ENCODE measurements at regions of chr15 and their contacts with region 1.

Region 1: GRCh38 chr15:101156509-101157159 is 95.2 kb downstream of the CHSY1 start:
- DNase-seq: no peak
- H3K4me3 ChIP-seq: no peak overlapping the region
- H3K27ac ChIP-seq: no peak overlapping the region
- H3K4me1 ChIP-seq: peaks cover 0 to 6% (median 0%) of the 10 kb centered on the region in 4 experiments; a peak in 3 of 7 replicates
- H3K27me3 ChIP-seq: peaks cover 0 to 2% (median 0%) of the 10 kb centered on the region in 4 experiments; a peak in 1 of 7 replicates
- CTCF ChIP-seq: no peak
- EP300 ChIP-seq: no peak
- POLR2A ChIP-seq: no peak
- RAD21 ChIP-seq: no peak

Region 2: DNA sequence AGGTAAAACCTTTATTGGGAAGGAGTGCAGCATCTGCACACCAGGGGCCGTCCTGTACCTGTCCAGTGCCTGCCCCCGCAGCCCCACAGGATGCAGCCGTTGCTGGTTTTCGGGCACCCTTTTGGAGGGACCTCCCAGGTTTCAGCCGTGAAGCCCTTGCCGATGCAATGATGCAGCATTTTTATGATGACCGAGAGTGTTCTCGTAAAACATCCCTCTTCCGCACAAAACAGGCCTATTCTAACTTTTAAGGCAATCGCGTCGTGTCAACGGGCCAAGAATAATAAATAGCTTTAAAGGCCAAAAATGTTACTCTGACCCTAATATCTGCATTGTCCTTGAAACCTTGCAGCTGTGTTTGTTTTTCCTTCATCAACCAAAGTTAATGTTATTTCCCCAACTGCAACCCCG is 111.4 kb before region 1 on chr15:
- CTCF ChIA-PET with region 1: no interaction called
- POLR2A ChIA-PET with region 1: no interaction called
- DNase-seq: no peak
- H3K4me3 ChIP-seq: no peak overlapping the region
- H3K27ac ChIP-seq: no peak overlapping the region
- H3K4me1 ChIP-seq: peaks cover 0 to 9% (median 5%) of the 10 kb centered on the region in 4 experiments; a peak in 6 of 7 replicates
- H3K27me3 ChIP-seq: 0 out of 7 replicates have a peak, but pooled peaks cover 0 to 2% (median 0%) of the 10 kb centered on the region in 4 experiments
- CTCF ChIP-seq: no peak
- EP300 ChIP-seq: no peak
- POLR2A ChIP-seq: no peak
- RAD21 ChIP-seq: no peak

Region 3: DNA sequence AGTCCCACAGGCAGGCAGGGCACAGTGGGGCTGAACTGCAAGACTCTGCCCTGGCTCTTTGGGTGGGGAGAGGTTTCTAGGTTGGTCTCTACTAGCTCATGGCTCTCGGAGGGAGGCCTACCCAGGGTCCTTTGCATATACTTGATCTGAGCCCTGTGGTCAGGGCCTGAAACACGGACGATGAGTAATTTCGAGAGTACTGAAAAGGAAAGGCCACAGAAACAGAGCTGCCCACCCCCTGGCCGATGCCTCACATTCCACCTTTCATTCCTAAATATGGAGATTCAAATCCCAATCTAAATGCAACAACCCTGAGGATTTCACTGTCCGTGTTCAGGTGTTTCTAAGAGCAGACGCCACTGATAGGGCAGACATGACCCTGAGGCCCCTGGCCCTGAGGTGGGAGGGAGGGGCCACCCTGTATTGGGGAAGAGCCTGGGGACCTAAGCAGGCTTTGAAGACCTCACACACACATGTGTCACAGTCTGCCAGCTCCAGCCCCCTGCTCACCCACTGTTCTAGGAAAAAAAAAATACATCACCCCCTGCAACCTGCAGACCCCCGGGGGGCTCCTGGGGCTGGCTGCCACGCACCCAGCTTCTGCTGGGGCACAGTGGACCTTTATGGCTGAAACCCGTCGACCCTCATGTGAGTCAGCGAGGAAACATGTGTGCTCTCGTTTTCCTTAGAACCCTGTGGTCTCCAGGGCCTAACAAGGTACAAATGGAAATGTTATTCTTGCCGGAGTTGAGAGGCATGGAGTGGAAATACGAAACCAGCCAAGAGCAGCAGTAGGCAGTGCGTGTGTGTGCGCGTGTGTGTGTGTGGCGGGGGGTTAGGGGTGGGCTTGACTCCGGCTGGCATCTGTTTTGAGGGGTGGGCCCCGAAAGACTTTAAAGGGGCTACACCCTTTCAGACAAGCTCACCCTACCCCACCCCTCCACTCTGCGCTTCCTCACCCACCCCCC is 17.4 kb before region 1 on chr15:
- CTCF ChIA-PET with region 1: interaction called, 128 read pairs
- POLR2A ChIA-PET with region 1: interaction called, 4 read pairs
- DNase-seq: no peak
- H3K4me3 ChIP-seq: no peak overlapping the region
- H3K27ac ChIP-seq: no peak overlapping the region
- H3K4me1 ChIP-seq: peaks cover 0 to 5% (median 0%) of the 10 kb centered on the region in 4 experiments; a peak in 1 of 7 replicates
- H3K27me3 ChIP-seq: no peaks in the 10 kb centered on the region; a peak in 1 of 7 replicates
- CTCF ChIP-seq: no peak
- EP300 ChIP-seq: no peak
- POLR2A ChIP-seq: no peak
- RAD21 ChIP-seq: no peak

Region 4: DNA sequence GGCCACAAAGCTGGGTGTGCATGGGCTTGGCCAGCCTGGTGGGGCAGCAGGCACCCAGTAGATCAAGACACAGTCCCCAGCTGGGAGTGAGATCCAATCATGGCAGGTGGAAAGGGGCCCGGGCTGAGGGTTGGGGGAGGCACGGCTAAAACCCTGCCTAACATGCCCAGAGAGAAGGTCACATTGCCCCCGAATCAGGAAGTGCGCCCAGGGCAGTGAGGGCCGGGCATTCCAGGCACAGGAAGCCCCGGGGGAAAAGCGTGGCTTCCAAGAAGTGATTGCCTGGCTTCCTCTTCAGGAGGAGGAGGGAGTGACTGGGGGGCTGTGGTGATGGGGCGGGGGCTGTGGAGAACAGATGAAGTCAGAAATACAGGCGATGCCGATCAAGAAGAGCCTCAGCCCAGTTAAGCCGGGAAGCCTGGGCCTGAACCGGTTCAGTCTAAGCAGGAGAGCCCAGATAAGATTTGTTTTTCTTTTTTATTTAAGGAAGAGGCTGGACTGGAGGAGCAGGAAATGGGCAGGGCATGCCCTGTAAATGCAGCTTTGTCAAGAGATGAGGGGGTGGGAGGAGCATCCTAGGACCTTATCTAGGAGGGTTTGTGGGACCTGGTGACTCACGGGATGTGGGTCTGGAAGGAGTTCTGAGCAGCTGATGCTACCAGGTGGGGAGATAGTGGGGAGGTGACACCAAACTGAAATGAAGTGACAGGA is 11.3 kb after region 1 on chr15:
- CTCF ChIA-PET with region 1: interaction called, 29 read pairs
- POLR2A ChIA-PET with region 1: interaction called, 4 read pairs
- DNase-seq: no peak
- H3K4me3 ChIP-seq: no peak overlapping the region
- H3K27ac ChIP-seq: no peak overlapping the region
- H3K4me1 ChIP-seq: peaks cover 0 to 8% (median 0%) of the 10 kb centered on the region in 4 experiments; a peak in 3 of 7 replicates
- H3K27me3 ChIP-seq: no peaks in the 10 kb centered on the region
- CTCF ChIP-seq: no peak
- EP300 ChIP-seq: no peak
- POLR2A ChIP-seq: no peak
- RAD21 ChIP-seq: no peak

Region 5: DNA sequence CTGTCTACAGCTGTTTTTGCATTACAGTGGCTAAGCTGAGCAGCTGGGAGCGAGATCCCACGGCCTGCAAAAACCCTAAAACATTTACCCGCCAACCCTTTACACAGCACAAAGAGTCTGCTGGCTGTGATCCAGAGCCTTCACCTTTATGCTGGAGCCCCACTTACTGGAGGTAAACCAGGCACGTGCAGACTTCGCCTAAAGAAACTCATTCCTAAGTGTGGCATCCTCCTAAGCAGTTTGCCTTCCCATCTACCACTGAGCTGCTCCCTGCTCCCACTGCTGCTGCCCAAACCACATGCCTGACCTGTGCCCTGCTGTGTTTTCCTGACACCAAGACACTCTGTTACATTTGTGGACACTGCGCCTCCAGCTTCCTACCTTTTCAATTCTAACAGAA is 42.2 kb after region 1 on chr15:
- CTCF ChIA-PET with region 1: no interaction called
- POLR2A ChIA-PET with region 1: no interaction called
- DNase-seq: no peak
- H3K4me3 ChIP-seq: no peak overlapping the region
- H3K27ac ChIP-seq: no peak overlapping the region
- H3K4me1 ChIP-seq: peaks cover 10 to 31% (median 18%) of the 10 kb centered on the region in 4 experiments
- H3K27me3 ChIP-seq: no peaks in the 10 kb centered on the region
- CTCF ChIP-seq: no peak
- EP300 ChIP-seq: no peak
- POLR2A ChIP-seq: no peak
- RAD21 ChIP-seq: no peak

Region 6: DNA sequence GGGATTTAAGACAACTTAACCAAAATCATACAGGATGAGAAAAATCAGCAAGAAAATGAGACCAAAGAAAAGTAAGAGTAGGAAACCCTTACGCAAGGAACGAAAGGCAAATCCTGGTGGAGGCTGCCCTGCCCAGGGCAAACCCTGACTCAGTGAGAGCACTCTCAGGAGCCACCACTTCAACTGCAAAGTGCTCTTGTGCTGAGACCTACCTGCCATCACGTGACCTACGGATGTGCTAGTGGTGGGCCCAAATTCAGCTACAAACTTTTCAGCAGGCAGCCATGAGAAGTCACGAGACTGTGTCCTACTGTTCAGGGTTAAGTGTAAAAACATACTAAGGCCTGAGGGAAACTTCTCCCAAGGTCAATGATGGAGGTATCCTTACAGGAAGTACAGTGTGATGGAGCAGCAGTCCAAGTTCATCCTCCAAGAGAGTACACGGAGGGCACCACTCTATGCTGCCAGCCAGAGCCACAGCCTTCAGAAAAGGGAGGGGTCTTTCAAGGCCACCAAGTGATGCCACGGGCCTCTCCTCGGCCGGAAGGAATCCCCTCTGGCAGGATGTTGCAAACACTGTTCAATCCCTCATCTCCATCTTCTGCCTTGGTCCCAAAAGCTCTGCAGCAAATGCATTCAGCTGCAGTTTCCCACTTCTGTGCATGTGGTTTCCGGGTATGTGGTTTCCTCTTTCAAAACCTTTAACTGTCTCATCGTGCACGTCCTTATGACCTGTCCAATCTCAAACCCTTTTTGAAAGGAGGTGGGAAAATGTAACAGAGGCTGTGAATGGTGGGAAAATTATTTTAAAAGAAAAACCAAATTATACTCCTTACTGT is 85.7 kb after region 1 on chr15:
- CTCF ChIA-PET with region 1: interaction called, 16 read pairs
- POLR2A ChIA-PET with region 1: no interaction called
- DNase-seq: no peak
- H3K4me3 ChIP-seq: no peak overlapping the region; a peak in 1 of 8 replicates
- H3K27ac ChIP-seq: no peak overlapping the region
- H3K4me1 ChIP-seq: peaks cover 3 to 23% (median 11%) of the 10 kb centered on the region in 4 experiments; a peak in 5 of 7 replicates
- H3K27me3 ChIP-seq: no peaks in the 10 kb centered on the region
- CTCF ChIP-seq: no peak
- EP300 ChIP-seq: no peak
- POLR2A ChIP-seq: no peak
- RAD21 ChIP-seq: no peak